ENCODE measurements at regions of chr5 and their contacts with region 1.

Region 1: GRCh38 chr5:39424736-39425637 is at the start of gene DAB2:
- DNase-seq: peak; percentile 18
- ATAC-seq: peak; percentile 56
- H3K4me3 Mint-ChIP-seq: peak within 1 kb of the TSS; percentile 78
- H3K27ac Mint-ChIP-seq: no peak within 1 kb of the TSS
- H3K4me1 Mint-ChIP-seq: peaks cover 10% of the 10 kb centered on the region
- H3K27me3 Mint-ChIP-seq: peaks cover 25% of the 10 kb centered on the region
- CTCF ChIP-seq: no peak
- total RNA-seq, gene DAB2: not detected in 2 replicates

Region 2: DNA sequence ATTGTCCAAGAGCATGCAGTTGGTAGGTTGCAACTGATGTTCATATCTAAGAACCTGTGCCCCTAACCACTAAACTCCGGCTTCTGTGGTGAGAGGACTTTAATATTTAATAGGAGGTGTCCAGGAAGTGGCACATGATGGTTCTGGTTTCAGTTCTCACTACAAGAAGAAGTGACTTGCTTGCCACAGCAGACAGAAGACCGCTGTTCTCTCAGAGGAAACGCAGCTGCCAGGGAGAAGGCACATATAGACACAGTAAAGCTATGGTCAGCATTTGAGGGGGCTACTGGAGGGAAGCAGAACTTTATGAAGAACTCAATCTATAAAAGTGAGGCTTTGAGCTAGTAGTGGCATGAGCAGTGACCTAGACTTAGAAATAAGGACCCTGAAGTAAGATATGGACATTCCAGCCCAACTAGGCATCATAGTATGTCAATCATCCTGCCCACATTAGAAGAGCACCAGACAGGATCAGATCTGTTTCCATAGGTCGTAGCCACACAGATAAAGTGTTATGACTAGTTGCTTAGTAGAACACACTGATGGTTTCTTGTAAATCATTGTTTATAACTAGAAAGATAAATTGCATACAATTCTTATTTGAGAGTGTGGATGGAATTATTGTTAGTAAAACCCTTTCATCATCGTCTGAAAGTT is 36.2 kb after region 1 on chr5:
- CTCF ChIA-PET with region 1: no interaction called
- POLR2A ChIA-PET with region 1: no interaction called
- intact Hi-C with region 1: loop called (anchors 5 kb)
- DNase-seq: no peak
- ATAC-seq: peak; percentile 93
- H3K4me3 Mint-ChIP-seq: peak overlapping the region; percentile 12
- H3K27ac Mint-ChIP-seq: peak overlapping the region; percentile 80
- H3K4me1 Mint-ChIP-seq: peaks cover 27% of the 10 kb centered on the region
- H3K27me3 Mint-ChIP-seq: peaks cover 15% of the 10 kb centered on the region
- CTCF ChIP-seq: no peak

Region 3: GRCh38 chr5:39880985-39881384 is 456.0 kb after region 1 on chr5:
- CTCF ChIA-PET with region 1: no interaction called
- POLR2A ChIA-PET with region 1: no interaction called
- intact Hi-C with region 1: no loop called
- DNase-seq: no peak
- ATAC-seq: no peak
- H3K4me3 Mint-ChIP-seq: no peak overlapping the region
- H3K27ac Mint-ChIP-seq: no peak overlapping the region
- H3K4me1 Mint-ChIP-seq: no peaks in the 10 kb centered on the region
- H3K27me3 Mint-ChIP-seq: no peaks in the 10 kb centered on the region
- CTCF ChIP-seq: no peak